ENCODE measurements at regions of chr14 and their contacts with region 1.

Region 1: GRCh38 chr14:104826189-104826860 is 25.4 kb downstream of the ZBTB42 start:
- DNase-seq: peak; percentile 91 to 96 (median 91)
- ATAC-seq: peak; percentile 59 to 94 (median 88)
- H3K4me3 ChIP-seq: peak overlapping the region; percentile 39 to 76 (median 68)
- H3K27ac ChIP-seq: peak overlapping the region in 8 of 12 donors; percentile 20 to 70 (median 46)
- H3K4me1 ChIP-seq: peaks cover 0 to 22% (median 18%) of the 10 kb centered on the region in 12 donors
- H3K27me3 ChIP-seq: peaks cover 0 to 17% (median 0%) of the 10 kb centered on the region in 9 donors
- CTCF ChIP-seq: peak; percentile 68 to 96 (median 84)
- POLR2A ChIP-seq: no peak

Region 2: GRCh38 chr14:104768437-104769323 is 57.6 kb before region 1 on chr14:
- intact Hi-C with region 1: loop called (anchors 1 to 2 kb)
- DNase-seq: peak; percentile 86 to 95 (median 89)
- ATAC-seq: peak; percentile 85 to 92 (median 89)
- H3K4me3 ChIP-seq: no peak overlapping the region
- H3K27ac ChIP-seq: peak overlapping the region in 6 of 12 donors; percentile 10 to 51 (median 29)
- H3K4me1 ChIP-seq: peaks cover 0 to 12% (median 9%) of the 10 kb centered on the region in 12 donors
- H3K27me3 ChIP-seq: no peaks in the 10 kb centered on the region
- CTCF ChIP-seq: peak; percentile 92 to 98 (median 94)
- POLR2A ChIP-seq: no peak

Region 3: GRCh38 chr14:104773505-104774453 is 52.5 kb before region 1 on chr14:
- intact Hi-C with region 1: loop called (anchors 1 to 2 kb)
- DNase-seq: no peak
- ATAC-seq: no peak
- H3K4me3 ChIP-seq: no peak overlapping the region
- H3K27ac ChIP-seq: no peak overlapping the region
- H3K4me1 ChIP-seq: peaks cover 0 to 5% (median 3%) of the 10 kb centered on the region in 12 donors
- H3K27me3 ChIP-seq: no peaks in the 10 kb centered on the region
- CTCF ChIP-seq: no peak
- POLR2A ChIP-seq: no peak

Measured in heart left ventricle (tissue), 16 donors.